T-cell (primary cell): ENCODE measurements at regions of chr16 and their contacts with region 1.

Region 1: DNA sequence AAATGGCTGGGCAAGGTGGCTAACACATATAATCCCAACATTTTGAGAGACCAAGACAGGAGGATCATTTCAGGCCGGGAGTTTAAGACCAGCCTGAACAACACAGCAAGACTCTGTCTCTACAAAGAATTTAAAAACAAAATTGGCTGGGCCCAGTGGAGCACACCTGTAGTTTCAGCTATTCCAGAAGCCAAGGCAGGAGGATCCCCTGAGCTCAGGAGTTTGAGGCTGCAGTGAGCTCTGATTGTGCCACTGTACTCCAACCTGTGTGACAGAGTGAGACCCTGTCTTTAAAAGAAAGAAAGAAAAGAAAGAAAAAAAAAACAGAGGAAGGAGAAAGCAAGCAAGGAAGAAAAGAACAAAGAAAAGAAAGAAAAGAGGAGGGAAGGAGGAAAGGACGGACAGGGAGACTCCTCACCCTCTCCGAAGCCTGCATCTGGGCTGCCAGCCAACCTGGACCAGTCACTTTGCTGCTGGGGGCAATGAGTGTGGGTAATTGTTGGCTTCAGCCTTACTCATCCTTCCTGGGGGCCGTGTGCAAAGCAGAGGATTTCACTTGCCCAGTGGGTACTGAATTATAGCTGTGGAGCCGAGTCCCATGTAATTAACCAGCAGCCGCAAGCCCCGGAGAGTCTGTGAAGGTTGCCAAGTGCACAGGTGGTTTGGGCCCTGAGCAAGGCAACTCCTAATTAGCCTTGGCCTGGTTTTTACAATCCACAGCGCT is 6.7 kb upstream of the MT4 start:
- DNase-seq: no peak
- ATAC-seq: no peak
- H3K4me3 ChIP-seq: no peak overlapping the region
- H3K4me3 Mint-ChIP-seq: no peak overlapping the region
- H3K27ac ChIP-seq: no peak overlapping the region
- H3K27ac Mint-ChIP-seq: no peak overlapping the region
- H3K4me1 ChIP-seq: no peaks in the 10 kb centered on the region
- H3K4me1 Mint-ChIP-seq: no peaks in the 10 kb centered on the region
- H3K27me3 ChIP-seq: peaks cover 2 to 26% of the 10 kb centered on the region in 2 experiments
- H3K27me3 Mint-ChIP-seq: peaks cover 16 to 34% of the 10 kb centered on the region in 2 donors

Region 2: DNA sequence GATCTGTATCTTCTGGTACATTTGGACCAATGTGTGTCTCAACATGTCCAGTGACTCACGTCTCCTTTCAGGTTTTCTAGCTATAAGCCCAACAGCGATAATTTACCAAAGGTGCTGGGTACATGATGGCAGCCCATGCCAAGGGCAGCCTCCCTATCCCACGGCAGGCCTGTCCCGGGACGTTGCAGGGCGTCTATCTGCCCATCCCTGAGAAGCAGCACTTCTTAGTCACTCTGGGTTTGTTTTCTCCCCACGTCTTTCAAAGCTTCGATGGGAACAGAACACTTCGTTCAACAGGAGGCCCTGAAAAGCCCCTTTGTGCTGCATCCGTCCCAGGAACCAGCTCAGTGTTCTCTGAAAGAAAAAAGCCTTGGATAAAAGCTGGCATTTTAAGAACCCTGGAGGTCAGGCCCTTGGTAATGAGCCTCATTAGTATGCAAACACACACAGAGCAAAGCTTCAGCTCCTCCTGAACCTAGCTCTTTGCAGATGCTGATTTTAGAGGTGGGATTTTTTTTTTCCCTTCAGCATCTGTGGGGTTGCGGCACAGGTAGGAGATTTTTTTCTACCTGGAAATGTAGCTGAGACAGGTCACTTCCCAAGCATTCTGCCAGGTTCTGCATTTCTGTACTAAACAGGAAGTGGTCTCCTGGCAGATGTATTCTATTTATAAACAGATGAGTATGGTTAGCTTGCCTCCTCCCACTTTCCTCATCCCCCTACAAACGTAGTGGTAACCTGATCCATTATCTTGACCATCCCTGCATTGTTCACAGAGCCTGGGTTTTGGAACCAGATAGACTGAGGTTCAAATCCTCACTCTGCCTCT is 10.9 kb before region 1 on chr16:
- CTCF ChIA-PET with region 1: no interaction called
- POLR2A ChIA-PET with region 1: no interaction called
- DNase-seq: no peak
- ATAC-seq: peak; percentile 45 to 64 (median 52)
- H3K4me3 ChIP-seq: no peak overlapping the region
- H3K4me3 Mint-ChIP-seq: peak overlapping the region in 1 of 3 donors; percentile 17
- H3K27ac ChIP-seq: no peak overlapping the region
- H3K27ac Mint-ChIP-seq: peak overlapping the region; percentile 65 to 81
- H3K4me1 ChIP-seq: peaks cover 6 to 12% of the 10 kb centered on the region in 2 experiments
- H3K4me1 Mint-ChIP-seq: peaks cover 7 to 20% (median 16%) of the 10 kb centered on the region in 3 donors
- H3K27me3 ChIP-seq: peaks cover 0 to 5% of the 10 kb centered on the region in 2 experiments
- H3K27me3 Mint-ChIP-seq: peaks cover 4 to 7% of the 10 kb centered on the region in 2 donors

Region 3: DNA sequence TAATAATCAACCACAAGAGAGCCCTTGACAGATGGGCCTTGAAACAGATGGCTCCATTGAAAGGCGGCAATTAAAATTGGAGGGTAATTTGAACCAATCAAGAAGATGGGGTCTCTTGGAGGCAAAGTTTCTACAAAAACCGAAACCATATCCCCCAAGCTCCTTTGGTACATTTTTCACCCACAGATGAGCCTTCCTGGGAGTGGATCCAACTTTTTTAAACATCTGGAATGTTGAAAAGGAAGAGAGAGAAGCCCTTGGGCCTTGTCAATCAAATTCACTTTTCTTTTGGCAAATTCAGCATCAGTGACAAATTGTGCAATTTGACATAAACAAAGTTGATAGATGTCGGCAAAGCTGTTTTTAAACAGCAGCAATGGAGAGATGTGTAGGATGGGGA is 158.6 kb after region 1 on chr16:
- CTCF ChIA-PET with region 1: interaction called in 1 of 2 experiments, 10 read pairs
- POLR2A ChIA-PET with region 1: no interaction called
- DNase-seq: no peak
- ATAC-seq: no peak
- H3K4me3 ChIP-seq: no peak overlapping the region
- H3K4me3 Mint-ChIP-seq: no peak overlapping the region
- H3K27ac ChIP-seq: no peak overlapping the region
- H3K27ac Mint-ChIP-seq: no peak overlapping the region
- H3K4me1 ChIP-seq: no peaks in the 10 kb centered on the region
- H3K4me1 Mint-ChIP-seq: peaks cover 2% of the 10 kb centered on the region in 3 donors
- H3K27me3 ChIP-seq: no peaks in the 10 kb centered on the region
- H3K27me3 Mint-ChIP-seq: no peaks in the 10 kb centered on the region